Calu3 (cell line): ENCODE measurements at regions of chr4 and their contacts with region 1.

Region 1: DNA sequence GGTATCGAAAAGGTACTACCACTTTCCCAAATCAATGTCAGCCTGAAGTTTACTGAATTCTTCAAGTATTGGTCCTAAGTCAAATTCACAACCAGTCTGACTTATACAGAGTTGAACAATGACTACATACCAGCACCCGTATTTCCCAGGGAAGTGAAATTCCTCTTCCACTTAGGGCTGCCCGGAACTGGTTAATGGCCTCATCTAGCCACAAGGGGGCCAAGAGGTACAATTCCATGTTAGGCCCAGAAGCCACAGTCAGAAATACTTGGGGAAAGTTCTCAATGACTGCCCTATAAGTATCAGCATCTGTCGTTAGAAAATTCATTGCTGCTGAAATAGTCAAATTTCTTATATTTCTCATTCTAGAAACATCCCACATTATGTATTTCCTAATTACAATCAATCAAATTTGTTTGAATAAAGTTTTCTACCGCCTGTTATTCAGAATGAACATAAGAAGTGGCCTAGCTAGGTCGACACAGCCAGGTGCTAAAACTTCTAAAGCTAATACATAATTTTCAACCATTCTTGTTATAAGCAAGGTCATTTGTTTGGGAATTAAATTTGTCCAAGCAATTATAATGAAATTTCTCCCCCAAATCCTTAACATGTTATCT is 5.7 kb upstream of the PCDH7 start:
- DNase-seq: peak; percentile 48
- H3K4me3 Mint-ChIP-seq: no peak overlapping the region
- H3K27ac Mint-ChIP-seq: no peak overlapping the region
- H3K4me1 Mint-ChIP-seq: peaks cover 17% of the 10 kb centered on the region
- H3K27me3 Mint-ChIP-seq: peaks cover 28% of the 10 kb centered on the region
- CTCF ChIP-seq: peak; percentile 33

Region 2: GRCh38 chr4:30789219-30789671 is 74.7 kb after region 1 on chr4:
- CTCF ChIA-PET with region 1: no interaction called
- intact Hi-C with region 1: loop called (anchors 2 kb)
- DNase-seq: no peak
- H3K4me3 Mint-ChIP-seq: no peak overlapping the region
- H3K27ac Mint-ChIP-seq: no peak overlapping the region
- H3K4me1 Mint-ChIP-seq: no peaks in the 10 kb centered on the region
- H3K27me3 Mint-ChIP-seq: no peaks in the 10 kb centered on the region
- CTCF ChIP-seq: no peak

Region 3: GRCh38 chr4:30863021-30863420 is 148.5 kb after region 1 on chr4:
- CTCF ChIA-PET with region 1: no interaction called
- intact Hi-C with region 1: loop called (anchors 5 kb)
- DNase-seq: no peak
- H3K4me3 Mint-ChIP-seq: no peak overlapping the region
- H3K27ac Mint-ChIP-seq: no peak overlapping the region
- H3K4me1 Mint-ChIP-seq: peaks cover 19% of the 10 kb centered on the region
- H3K27me3 Mint-ChIP-seq: no peaks in the 10 kb centered on the region
- CTCF ChIP-seq: no peak

Region 4: GRCh38 chr4:30962939-30963338 is 248.4 kb after region 1 on chr4:
- CTCF ChIA-PET with region 1: no interaction called
- intact Hi-C with region 1: loop called (anchors 5 kb)
- DNase-seq: peak; percentile 14
- H3K4me3 Mint-ChIP-seq: no peak overlapping the region
- H3K27ac Mint-ChIP-seq: peak overlapping the region; percentile 10
- H3K4me1 Mint-ChIP-seq: no peaks in the 10 kb centered on the region
- H3K27me3 Mint-ChIP-seq: no peaks in the 10 kb centered on the region
- CTCF ChIP-seq: no peak

Region 5: GRCh38 chr4:31035761-31036160 is 321.2 kb after region 1 on chr4:
- CTCF ChIA-PET with region 1: no interaction called
- intact Hi-C with region 1: no loop called
- DNase-seq: no peak
- H3K4me3 Mint-ChIP-seq: no peak overlapping the region
- H3K27ac Mint-ChIP-seq: no peak overlapping the region
- H3K4me1 Mint-ChIP-seq: no peaks in the 10 kb centered on the region
- H3K27me3 Mint-ChIP-seq: no peaks in the 10 kb centered on the region
- CTCF ChIP-seq: no peak

Region 6: DNA sequence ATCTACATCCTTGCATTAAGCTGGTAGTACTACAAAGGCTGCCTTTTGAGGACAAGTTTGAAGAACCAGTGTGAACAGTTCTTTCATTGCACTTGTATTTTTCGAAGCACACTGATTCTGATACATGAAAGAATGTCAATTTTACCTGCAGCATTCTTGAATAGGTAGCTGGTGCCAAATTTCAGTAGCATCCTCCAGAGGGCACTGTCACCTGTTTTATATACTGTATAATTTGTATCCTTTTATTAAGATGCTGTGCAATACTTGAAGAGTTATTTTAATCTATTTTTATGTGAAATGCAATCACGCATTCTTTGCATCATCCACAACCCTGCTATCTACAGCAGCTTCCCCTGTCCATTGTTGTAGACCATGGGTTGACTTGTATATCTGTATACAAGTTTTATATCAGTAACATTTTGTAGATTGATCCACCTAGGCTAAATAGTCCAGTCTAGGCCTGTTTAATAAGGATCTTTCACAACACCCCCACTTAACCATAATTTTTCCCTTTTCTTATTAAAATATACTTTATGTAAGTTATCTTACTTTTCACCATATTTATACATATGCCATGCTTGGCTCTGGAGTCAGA is 331.3 kb after region 1 on chr4:
- CTCF ChIA-PET with region 1: no interaction called
- intact Hi-C with region 1: loop called (anchors 1 kb)
- DNase-seq: peak; percentile 19
- H3K4me3 Mint-ChIP-seq: no peak overlapping the region
- H3K27ac Mint-ChIP-seq: no peak overlapping the region
- H3K4me1 Mint-ChIP-seq: peaks cover 7% of the 10 kb centered on the region
- H3K27me3 Mint-ChIP-seq: no peaks in the 10 kb centered on the region
- CTCF ChIP-seq: no peak

Region 7: DNA sequence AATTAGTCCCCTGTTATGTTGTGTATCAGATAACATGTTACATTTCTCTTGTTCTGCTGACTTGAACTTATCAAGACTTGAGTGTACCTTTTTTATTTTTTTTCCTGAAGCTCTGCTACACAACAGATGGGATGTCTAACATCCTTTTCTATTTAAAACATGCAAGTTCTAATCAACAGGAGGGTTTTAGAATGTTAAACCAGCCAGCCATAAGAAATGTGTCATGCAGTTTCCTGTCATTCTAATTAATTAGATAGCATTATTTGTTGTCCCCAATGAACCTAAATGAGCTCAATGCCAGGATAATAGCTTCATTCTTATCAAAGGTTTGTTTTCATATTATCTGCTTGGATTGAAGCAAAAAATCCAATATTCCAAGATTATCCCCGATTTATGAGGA is 963.8 kb after region 1 on chr4:
- CTCF ChIA-PET with region 1: no interaction called
- intact Hi-C with region 1: loop called (anchors 5 kb)
- DNase-seq: no peak
- H3K4me3 Mint-ChIP-seq: no peak overlapping the region
- H3K27ac Mint-ChIP-seq: no peak overlapping the region
- H3K4me1 Mint-ChIP-seq: no peaks in the 10 kb centered on the region
- H3K27me3 Mint-ChIP-seq: no peaks in the 10 kb centered on the region
- CTCF ChIP-seq: no peak